BJ (cell line): ENCODE measurements at regions of chr1 and their contacts with region 1.

Region 1: GRCh38 chr1:53278201-53278725 is 39.9 kb upstream of the MAGOH start:
- DNase-seq: no peak
- H3K4me3 ChIP-seq: no peak overlapping the region
- H3K27me3 ChIP-seq: no peaks in the 10 kb centered on the region
- CTCF ChIP-seq: peak; percentile 82

Region 2: DNA sequence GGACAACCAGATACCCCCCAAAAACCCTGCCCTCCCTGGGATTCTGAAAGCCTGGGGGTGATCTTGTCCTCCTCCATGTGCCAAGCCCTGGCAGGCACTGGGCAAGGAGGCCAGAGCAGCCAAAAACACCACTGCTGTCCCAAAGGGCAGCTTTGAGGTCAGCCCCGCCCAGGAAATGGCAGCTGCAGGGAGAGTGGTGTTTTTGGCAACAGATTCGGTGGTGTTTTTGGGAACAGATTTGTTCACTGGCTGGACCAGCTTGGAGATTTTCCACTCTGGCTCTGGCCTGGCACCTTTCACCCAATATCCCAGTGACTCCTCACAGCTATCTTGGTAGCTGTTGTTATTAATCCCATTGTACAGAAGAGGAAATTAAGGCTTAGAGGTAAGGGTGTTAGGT is 14.9 kb after region 1 on chr1:
- CTCF ChIA-PET with region 1: interaction called, 19 read pairs
- POLR2A ChIA-PET with region 1: no interaction called
- DNase-seq: no peak
- H3K4me3 ChIP-seq: no peak overlapping the region
- H3K27me3 ChIP-seq: no peaks in the 10 kb centered on the region
- CTCF ChIP-seq: no peak

Region 3: GRCh38 chr1:53376041-53376461 is 97.8 kb after region 1 on chr1:
- CTCF ChIA-PET with region 1: interaction called, 11 read pairs
- POLR2A ChIA-PET with region 1: no interaction called
- DNase-seq: no peak
- H3K4me3 ChIP-seq: no peak overlapping the region
- H3K27me3 ChIP-seq: peaks cover 1% of the 10 kb centered on the region
- CTCF ChIP-seq: no peak

Region 4: GRCh38 chr1:53393325-53393792 is 115.1 kb after region 1 on chr1:
- CTCF ChIA-PET with region 1: interaction called, 110 read pairs
- POLR2A ChIA-PET with region 1: interaction called, 3 read pairs
- DNase-seq: no peak
- H3K4me3 ChIP-seq: no peak overlapping the region
- H3K27me3 ChIP-seq: peaks cover 3% of the 10 kb centered on the region
- CTCF ChIP-seq: peak; percentile 82

Region 5: GRCh38 chr1:53401813-53402745 is 123.8 kb after region 1 on chr1:
- CTCF ChIA-PET with region 1: interaction called, 60 read pairs
- POLR2A ChIA-PET with region 1: no interaction called
- DNase-seq: no peak
- H3K4me3 ChIP-seq: no peak overlapping the region
- H3K27me3 ChIP-seq: peaks cover 11% of the 10 kb centered on the region
- CTCF ChIP-seq: no peak

Region 6: DNA sequence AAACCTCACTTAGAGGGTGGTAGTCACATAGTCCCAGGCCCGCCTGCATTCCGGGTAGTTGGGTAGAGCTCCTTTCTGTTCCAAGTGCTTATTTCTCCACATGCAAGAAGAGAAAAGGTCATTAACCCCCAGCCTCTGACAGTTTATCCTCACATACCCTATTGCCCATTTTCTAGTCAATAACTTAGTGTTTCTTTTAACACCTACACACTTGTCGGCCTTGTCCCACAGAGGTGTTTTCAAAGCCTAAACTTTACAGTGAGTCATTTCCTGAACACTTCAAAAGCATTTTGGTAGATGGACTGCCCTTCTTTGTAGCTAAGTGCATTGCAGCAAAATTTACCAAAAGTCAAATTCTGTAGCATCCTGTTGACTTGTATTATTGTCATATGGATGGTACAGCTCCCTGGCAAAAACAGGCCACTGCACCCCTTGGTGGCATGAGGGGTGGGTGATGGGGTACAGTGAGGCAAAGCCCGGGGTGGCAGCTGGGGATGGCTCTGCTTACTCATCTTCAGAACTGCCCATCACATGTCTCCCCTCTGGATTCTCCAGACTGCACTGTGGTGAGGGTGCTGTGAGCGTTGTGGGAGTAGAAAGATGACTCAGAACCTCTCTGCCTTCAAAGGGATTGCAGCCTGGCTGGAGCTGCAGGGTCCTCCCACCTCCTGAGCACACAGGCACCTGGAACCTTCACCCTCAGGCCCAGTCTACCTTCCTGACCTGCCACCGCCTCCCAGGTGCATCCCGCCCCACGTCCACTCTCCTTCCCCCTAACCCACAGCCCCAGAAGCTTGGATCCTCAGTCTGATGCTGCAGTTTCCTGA is 135.1 kb after region 1 on chr1:
- CTCF ChIA-PET with region 1: interaction called, 14 read pairs
- POLR2A ChIA-PET with region 1: no interaction called
- DNase-seq: peak; percentile 31
- H3K4me3 ChIP-seq: no peak overlapping the region
- H3K27me3 ChIP-seq: 0 out of 2 replicates have a peak, but pooled peaks cover 2% of the 10 kb centered on the region
- CTCF ChIP-seq: no peak

Region 7: GRCh38 chr1:53473463-53473862 is 195.2 kb after region 1 on chr1:
- CTCF ChIA-PET with region 1: interaction called, 12 read pairs
- POLR2A ChIA-PET with region 1: no interaction called
- DNase-seq: no peak
- H3K4me3 ChIP-seq: no peak overlapping the region
- H3K27me3 ChIP-seq: peaks cover 18% of the 10 kb centered on the region
- CTCF ChIP-seq: peak; percentile 56

Region 8: DNA sequence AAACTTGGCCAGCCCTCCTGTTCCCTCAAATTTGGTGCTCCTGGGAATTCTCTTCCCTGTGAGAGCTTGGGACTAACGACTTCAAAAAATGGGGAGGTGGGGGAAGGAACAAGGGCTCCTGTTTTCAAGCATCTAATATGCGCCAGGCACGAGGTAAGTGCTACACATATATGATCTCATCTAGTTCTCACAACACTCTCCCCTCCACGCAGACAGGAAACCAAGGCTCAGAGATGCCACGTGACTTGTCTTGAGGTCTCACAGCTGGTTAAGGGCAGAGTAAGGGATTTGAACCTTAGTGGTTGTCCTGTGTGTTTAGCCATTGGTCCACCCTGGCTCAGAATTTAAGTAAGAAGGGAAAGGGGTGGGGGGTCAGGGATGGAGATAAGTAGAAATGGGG is 306.9 kb after region 1 on chr1:
- CTCF ChIA-PET with region 1: no interaction called
- POLR2A ChIA-PET with region 1: no interaction called
- DNase-seq: no peak
- H3K4me3 ChIP-seq: no peak overlapping the region
- H3K27me3 ChIP-seq: no peaks in the 10 kb centered on the region
- CTCF ChIP-seq: no peak